ENCODE measurements at regions of chr1 and their contacts with region 1.

Region 1: GRCh38 chr1:158203693-158204457 is 23.2 kb downstream of the CD1D start:
- DNase-seq: peak in 1 of 2 donors; percentile 24
- ATAC-seq: peak in 5 of 8 donors; percentile 58 to 84 (median 65)
- H3K4me3 ChIP-seq: no peak overlapping the region
- H3K27ac ChIP-seq: no peak overlapping the region
- H3K4me1 ChIP-seq: peaks cover 0 to 13% (median 0%) of the 10 kb centered on the region in 9 donors
- H3K27me3 ChIP-seq: peaks cover 0 to 13% (median 0%) of the 10 kb centered on the region in 7 donors
- CTCF ChIP-seq: peak; percentile 54 to 89 (median 82)

Region 2: GRCh38 chr1:158496374-158496773 is 292.5 kb after region 1 on chr1:
- intact Hi-C with region 1: loop called in 3 of 10 experiments (anchors 5 to 10 kb)
- DNase-seq: no peak
- ATAC-seq: no peak
- H3K4me3 ChIP-seq: no peak overlapping the region
- H3K27ac ChIP-seq: no peak overlapping the region
- H3K4me1 ChIP-seq: no peaks in the 10 kb centered on the region
- H3K27me3 ChIP-seq: peaks cover 0 to 21% (median 0%) of the 10 kb centered on the region in 7 donors
- CTCF ChIP-seq: peak in 5 of 9 donors; percentile 23 to 51 (median 39)

Region 3: GRCh38 chr1:158506369-158506987 is 302.6 kb after region 1 on chr1:
- intact Hi-C with region 1: loop called in 2 of 10 experiments (anchors 10 kb)
- DNase-seq: peak; percentile 9
- ATAC-seq: no peak
- H3K4me3 ChIP-seq: no peak overlapping the region
- H3K27ac ChIP-seq: no peak overlapping the region
- H3K4me1 ChIP-seq: peaks cover 0 to 12% (median 0%) of the 10 kb centered on the region in 9 donors
- H3K27me3 ChIP-seq: peaks cover 0 to 9% (median 0%) of the 10 kb centered on the region in 7 donors
- CTCF ChIP-seq: peak in 7 of 9 donors; percentile 19 to 70 (median 29)

Region 4: DNA sequence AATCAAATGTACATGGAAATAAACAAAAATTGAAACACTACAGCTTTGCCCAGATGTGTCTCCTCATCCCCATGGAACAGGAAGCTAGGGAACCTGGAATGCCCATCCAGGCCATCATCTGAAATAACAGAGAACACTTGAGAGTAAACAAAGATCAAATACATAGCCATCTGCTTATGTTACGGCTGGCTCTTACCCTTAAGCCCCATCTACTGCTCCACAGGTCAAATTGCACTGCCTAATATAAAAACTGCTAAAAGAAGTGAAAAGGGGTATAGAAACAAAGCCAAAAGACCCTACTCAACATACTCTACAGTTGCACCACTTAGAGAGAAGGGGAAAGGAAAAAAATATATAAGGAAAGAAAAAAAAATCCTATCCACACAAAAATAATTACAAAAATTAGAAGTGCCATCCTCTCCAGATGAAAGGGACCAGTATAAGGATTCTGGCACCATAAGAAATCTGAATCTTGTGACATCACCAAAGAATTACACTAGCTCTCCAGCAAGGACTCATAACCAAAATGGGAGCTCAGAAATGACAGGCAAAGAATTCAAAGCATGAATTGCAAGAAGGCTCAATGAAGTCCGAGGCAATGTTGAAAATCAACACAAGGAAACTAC is 323.4 kb after region 1 on chr1:
- intact Hi-C with region 1: loop called in 3 of 10 experiments (anchors 5 to 10 kb)
- DNase-seq: no peak
- ATAC-seq: peak in 1 of 8 donors; percentile 16
- H3K4me3 ChIP-seq: no peak overlapping the region
- H3K27ac ChIP-seq: no peak overlapping the region
- H3K4me1 ChIP-seq: no peaks in the 10 kb centered on the region
- H3K27me3 ChIP-seq: no peaks in the 10 kb centered on the region
- CTCF ChIP-seq: peak in 7 of 9 donors; percentile 6 to 66 (median 46)

Region 5: DNA sequence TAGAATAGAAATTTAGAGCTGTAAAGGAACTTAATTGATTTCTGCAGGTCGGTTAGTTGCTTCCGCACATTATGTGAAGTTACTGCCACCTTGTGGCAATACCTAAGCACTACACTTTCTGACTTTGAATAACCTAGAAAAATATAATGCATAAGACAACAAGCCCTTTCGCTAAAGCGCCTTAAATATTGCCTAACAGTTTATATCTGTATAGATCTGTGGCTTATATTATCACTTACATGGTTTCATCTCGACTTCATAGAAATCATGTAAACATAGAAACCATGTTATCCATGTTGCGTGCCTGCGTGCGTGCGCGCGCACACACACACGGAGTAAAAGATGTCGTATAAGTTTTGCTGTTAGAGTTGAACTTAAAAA is 794.9 kb after region 1 on chr1:
- intact Hi-C with region 1: loop called in 7 of 10 experiments (anchors 2 to 10 kb)
- DNase-seq: peak; percentile 45 to 59
- ATAC-seq: peak; percentile 23 to 75 (median 55)
- H3K4me3 ChIP-seq: peak overlapping the region in 9 of 10 donors; percentile 16 to 65 (median 53)
- H3K27ac ChIP-seq: peak overlapping the region; percentile 27 to 95 (median 86)
- H3K4me1 ChIP-seq: peaks cover 0 to 40% (median 16%) of the 10 kb centered on the region in 9 donors
- H3K27me3 ChIP-seq: no peaks in the 10 kb centered on the region
- CTCF ChIP-seq: peak; percentile 76 to 96 (median 91)

Region 6: DNA sequence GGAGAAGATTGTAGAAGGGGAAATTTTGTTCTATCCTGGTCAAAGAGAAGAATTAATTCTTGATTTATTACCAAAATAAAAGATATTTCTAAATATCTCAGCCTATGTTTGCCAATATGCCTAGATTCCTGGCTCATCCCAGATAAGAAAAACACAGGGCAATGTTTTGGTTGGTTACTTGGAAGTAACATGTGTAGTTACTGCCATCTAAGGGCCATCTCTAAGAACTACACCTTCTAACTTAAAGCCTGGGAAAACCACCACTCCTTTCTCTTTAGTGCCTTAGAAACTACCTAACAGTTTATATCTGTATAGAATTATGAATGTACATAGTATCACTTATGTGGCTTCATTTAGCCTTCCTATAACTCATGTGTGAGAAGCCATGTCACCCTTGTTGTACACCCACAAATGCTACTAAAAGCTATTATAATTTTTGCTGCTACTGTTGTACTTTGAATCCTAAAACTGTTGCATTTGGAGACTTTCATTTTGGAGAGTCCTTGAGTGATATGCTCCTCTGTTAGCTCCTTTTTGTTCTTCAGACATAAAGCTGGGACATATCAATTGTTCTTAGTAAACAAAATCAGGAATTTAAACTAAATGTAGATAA is 868.2 kb after region 1 on chr1:
- intact Hi-C with region 1: loop called in 7 of 10 experiments (anchors 2 to 10 kb)
- DNase-seq: no peak
- ATAC-seq: peak in 6 of 8 donors; percentile 62 to 74 (median 66)
- H3K4me3 ChIP-seq: no peak overlapping the region
- H3K27ac ChIP-seq: no peak overlapping the region
- H3K4me1 ChIP-seq: peaks cover 0 to 43% (median 0%) of the 10 kb centered on the region in 9 donors
- H3K27me3 ChIP-seq: no peaks in the 10 kb centered on the region
- CTCF ChIP-seq: peak; percentile 40 to 86 (median 76)

Measured in heart right ventricle (tissue), 16 donors.